ENCODE measurements at regions of chr9 and their contacts with region 1.

Region 1: DNA sequence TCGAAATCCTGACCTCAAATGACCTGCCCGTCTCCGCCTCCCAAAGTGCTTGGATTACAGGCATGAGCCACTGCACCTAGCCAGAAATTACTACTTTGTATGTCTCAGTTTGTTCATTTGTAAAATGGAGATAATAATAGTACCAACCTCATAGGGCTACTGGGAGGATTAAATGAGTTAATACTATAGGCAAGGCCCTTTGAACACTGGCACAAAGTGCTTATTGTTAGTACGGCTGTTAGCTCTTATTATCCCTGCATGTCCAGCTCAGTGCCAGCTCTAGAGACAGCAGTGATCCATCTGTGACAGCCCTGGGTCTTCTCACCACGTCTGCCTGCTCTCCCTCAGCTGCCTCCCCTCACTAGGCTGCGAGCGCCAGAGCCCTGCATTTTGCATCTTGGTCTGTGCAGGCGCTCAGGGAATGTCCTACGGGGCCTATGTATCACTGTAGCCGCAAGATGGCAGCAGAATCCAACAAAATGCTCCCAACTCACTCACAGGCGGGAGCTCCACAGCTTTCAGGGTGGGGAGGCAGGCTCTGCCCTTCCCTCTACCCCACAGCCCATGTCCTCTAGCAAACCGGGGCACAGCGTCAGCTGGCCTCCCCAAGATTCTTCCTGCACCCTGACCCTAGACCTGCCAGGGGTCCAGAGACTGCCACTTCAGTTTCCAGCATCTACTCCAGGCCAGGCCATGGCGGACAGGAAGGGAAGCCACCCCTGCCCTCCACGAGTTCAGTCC is 17.7 kb upstream of the AKNA start:
- DNase-seq: peak; percentile 91
- H3K4me3 Mint-ChIP-seq: no peak overlapping the region
- H3K27ac Mint-ChIP-seq: peak overlapping the region; percentile 48
- H3K4me1 Mint-ChIP-seq: peaks cover 5% of the 10 kb centered on the region
- H3K27me3 Mint-ChIP-seq: no peaks in the 10 kb centered on the region

Region 2: GRCh38 chr9:114385412-114386181 is 19.9 kb before region 1 on chr9:
- CTCF ChIA-PET with region 1: interaction called, 14 read pairs
- intact Hi-C with region 1: no loop called
- DNase-seq: peak; percentile 97
- H3K4me3 Mint-ChIP-seq: peak overlapping the region; percentile 97
- H3K27ac Mint-ChIP-seq: peak overlapping the region; percentile 100
- H3K4me1 Mint-ChIP-seq: peaks cover 67% of the 10 kb centered on the region
- H3K27me3 Mint-ChIP-seq: no peaks in the 10 kb centered on the region

Region 3: DNA sequence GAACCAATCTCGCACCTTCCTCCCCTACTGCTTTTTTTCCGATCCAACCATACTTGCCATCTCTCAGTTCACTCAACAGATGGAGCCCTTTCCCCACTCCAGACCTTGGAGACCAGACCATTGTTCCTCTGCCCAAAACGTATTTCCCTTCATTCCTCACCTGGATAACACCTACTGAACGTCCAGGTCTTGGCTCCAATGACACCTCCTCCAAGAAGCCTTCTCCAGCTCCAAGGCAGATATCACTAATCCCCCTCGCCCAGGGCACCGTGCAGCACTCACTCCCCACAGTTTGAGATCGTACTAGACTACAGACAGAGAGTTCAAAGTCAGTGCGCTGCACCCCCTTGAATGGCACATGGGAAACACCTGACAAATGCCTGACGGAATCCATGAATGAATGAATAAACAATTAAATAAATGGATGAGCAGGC is 29.4 kb after region 1 on chr9:
- CTCF ChIA-PET with region 1: interaction called, 10 read pairs
- intact Hi-C with region 1: no loop called
- DNase-seq: peak; percentile 37
- H3K4me3 Mint-ChIP-seq: no peak overlapping the region
- H3K27ac Mint-ChIP-seq: no peak overlapping the region
- H3K4me1 Mint-ChIP-seq: peaks cover 2% of the 10 kb centered on the region
- H3K27me3 Mint-ChIP-seq: no peaks in the 10 kb centered on the region

Region 4: DNA sequence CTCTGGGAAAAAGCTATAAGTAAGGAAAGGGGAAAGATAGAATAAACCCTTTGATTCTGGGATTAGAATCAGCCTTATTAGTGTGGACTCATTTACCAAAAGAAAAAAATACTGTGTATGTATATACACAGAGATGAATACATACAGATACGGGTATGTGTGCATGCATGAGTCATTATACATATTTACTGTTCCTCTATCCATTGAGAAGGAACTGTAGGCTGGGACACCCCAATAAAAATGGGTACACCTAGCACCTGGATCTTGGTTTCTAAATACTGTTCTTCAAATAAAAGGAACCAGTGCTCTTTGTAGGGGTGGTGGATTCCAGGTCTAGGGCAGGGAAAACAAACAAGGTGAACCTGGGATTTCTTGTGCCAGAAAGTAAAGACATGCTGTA is 51.5 kb after region 1 on chr9:
- CTCF ChIA-PET with region 1: no interaction called
- intact Hi-C with region 1: no loop called
- DNase-seq: no peak
- H3K4me3 Mint-ChIP-seq: no peak overlapping the region
- H3K27ac Mint-ChIP-seq: no peak overlapping the region
- H3K4me1 Mint-ChIP-seq: peaks cover 13% of the 10 kb centered on the region
- H3K27me3 Mint-ChIP-seq: no peaks in the 10 kb centered on the region

Region 5: DNA sequence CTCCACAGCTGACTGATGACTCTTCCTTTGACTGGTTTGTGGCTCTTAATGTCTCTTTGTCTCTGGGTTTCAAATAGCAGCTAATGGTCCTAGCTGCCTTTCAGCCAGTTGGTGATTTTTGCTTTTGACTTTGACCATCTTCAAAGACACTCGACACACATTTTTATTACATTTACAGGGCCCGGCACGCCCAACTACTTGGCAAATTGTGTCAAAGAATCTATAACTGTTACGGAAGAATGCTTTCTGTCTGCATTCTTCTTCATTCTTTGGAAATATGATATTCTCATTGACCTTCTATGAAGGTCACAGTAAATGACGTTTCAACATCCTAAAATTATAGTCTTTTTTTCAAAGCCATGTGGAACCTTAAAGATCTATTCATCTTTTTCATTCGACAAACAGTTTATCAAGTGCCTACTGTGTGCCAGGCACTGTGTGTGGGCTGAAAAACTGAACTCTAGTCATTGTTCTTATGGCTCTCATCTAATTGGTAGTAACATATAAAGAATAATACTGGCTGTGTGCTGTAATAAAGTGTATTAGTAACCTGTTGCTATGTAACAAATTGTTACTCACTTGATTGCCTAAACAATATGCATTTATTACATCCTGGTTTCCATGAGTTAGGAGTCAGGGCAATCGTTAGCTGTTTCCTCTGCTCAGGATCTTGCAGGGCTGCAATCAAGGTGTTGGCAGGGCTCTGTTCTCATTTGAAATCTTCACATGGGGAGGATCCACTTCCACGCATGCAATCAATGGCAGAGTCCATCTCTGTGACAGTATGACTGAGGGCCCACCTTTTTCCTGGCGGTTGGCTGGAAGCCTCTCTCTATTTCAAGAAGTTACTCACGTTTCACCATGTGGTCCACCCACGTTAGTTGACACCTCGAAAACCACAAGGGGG is 106.8 kb after region 1 on chr9:
- CTCF ChIA-PET with region 1: interaction called, 27 read pairs
- intact Hi-C with region 1: no loop called
- DNase-seq: no peak
- H3K4me3 Mint-ChIP-seq: no peak overlapping the region
- H3K27ac Mint-ChIP-seq: no peak overlapping the region
- H3K4me1 Mint-ChIP-seq: peaks cover 7% of the 10 kb centered on the region
- H3K27me3 Mint-ChIP-seq: peaks cover 21% of the 10 kb centered on the region

Region 6: DNA sequence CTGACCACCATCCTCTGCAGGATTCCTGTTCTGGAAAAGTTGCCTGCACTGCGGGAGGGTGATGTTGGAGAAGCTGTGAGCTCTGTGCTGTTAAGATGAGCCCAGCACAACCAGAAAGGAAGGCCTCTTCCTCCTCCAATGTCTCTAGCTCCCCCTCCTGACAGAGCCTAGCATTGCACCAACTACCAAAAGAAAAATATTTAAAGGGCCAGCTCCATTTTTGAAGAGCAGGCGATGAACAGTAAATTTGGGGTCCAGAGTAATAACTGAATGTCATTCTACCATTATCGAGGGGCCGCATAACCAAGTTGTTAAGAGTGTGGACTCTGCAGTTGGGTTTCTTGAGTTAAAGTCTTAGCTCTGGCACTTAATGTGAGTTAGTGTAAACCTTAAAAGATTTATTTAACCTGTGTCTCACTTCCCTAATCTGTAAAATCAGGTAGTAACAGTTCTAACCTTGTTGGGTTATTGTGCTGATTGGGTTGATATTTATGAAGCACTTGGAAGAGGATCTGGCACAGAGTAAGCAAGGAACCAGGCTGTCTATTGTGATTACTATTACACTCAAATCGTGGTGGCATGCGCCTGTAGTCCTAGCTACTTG is 248.2 kb after region 1 on chr9:
- CTCF ChIA-PET with region 1: interaction called, 133 read pairs
- intact Hi-C with region 1: loop called (anchors 1 kb)
- DNase-seq: peak; percentile 92
- H3K4me3 Mint-ChIP-seq: no peak overlapping the region
- H3K27ac Mint-ChIP-seq: no peak overlapping the region
- H3K4me1 Mint-ChIP-seq: peaks cover 31% of the 10 kb centered on the region
- H3K27me3 Mint-ChIP-seq: no peaks in the 10 kb centered on the region

Region 7: GRCh38 chr9:115013998-115014397 is 608.5 kb after region 1 on chr9:
- CTCF ChIA-PET with region 1: interaction called, 5 read pairs
- intact Hi-C with region 1: loop called (anchors 2 kb)
- DNase-seq: peak; percentile 92
- H3K4me3 Mint-ChIP-seq: no peak overlapping the region
- H3K27ac Mint-ChIP-seq: peak overlapping the region; percentile 18
- H3K4me1 Mint-ChIP-seq: peaks cover 44% of the 10 kb centered on the region
- H3K27me3 Mint-ChIP-seq: no peaks in the 10 kb centered on the region

Measured in activated naive CD4-positive, alpha-beta T cell treated with anti-CD3 and anti-CD28 coated beads for 36 hours (primary cell).